Activated T-helper 1 cell treated with anti-CD3 and anti-CD28 coated beads, Interleukin-12 subunit alpha, Interleukin-12 subunit beta, Interleukin-2, Interleukin-4 antibody, amounts not matched to agents 30 ng/mL and 10 ng/mL and 1 ng/mL, durations not matched to agents 14 hours and 24 hours and 36 hours (primary cell): ENCODE measurements at regions of chr4 and their contacts with region 1.

Region 1: DNA sequence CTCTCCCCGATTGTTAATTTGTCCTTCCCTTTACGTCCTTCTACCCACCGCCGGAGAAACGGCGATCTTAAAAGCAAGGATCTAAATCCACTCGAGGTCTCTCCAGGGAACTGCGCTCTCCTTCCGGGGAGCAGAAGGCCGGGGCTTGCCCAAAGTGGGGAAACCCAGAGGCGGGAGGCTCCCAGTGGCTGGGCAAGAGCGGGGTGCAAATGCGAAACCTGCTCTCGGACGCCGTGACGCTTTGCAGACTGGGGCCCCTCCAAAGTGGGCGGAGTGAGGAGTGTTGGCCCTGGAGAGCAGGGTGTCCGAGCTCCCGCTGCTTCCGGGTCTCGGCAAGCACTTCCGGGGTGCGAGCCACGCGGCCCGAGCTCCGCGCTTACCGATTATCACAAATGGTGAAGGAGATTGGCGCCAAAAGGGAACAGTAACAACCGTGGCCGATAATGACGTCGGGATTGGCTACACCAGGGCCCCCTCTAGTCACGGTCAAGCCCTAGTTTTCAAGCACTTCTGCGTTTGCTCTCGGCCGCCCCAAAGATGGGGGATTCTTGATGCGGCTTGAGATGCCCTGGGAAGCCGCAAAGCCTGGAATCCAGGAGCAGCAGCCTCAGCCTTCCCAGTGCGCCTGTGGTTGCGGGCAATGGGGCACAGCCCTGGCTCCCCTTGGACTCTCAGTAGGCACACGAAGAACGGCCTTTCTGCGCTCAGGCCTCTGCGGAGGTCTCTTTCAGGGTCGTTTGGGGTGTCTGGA is 29.0 kb downstream of the HAND2 start:
- DNase-seq: no peak
- H3K4me3 Mint-ChIP-seq: peak overlapping the region; percentile 7
- H3K27ac Mint-ChIP-seq: no peak overlapping the region
- H3K4me1 Mint-ChIP-seq: peaks cover 6% of the 10 kb centered on the region
- H3K27me3 Mint-ChIP-seq: peaks cover 78% of the 10 kb centered on the region

Region 2: DNA sequence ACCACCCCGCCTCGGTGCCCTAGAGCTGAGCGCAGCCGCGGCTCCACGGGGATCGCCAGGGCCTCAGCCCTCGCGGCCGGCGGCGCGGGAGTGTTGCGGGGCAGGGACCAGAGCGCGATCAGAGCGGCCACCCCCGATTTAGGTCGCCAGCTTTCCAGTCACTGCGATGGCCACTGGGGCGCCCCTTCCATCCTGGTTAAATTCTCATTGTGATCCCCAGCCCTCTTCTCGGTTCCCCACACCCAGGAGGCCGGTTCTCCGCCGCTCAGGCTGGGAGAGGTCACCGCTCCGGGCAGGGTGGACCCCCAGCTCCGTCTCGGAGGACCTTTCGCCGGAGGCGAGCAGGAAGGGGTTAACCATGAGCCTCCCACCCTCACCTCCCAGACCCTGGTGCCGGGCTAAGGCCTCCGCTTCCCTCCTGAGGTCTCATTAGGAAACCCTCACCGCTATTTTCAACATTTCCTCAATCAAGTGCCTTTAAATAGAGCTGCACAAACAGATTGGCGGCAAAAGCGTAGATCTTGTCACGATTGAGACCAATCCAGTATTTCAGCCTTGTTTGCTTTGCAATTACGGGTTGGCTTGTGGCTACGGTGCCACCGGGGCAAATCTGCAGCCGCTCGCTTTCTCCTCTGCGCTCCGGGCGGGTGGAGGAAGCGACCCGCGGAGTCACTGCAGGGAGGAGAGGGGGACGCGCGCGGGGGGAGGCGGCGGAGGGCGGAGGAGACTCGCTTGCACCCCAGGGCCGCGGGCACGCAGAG is 37.3 kb after region 1 on chr4:
- intact Hi-C with region 1: loop called (anchors 5 kb)
- DNase-seq: no peak
- H3K4me3 Mint-ChIP-seq: peak overlapping the region; percentile 2
- H3K27ac Mint-ChIP-seq: no peak overlapping the region
- H3K4me1 Mint-ChIP-seq: peaks cover 4% of the 10 kb centered on the region
- H3K27me3 Mint-ChIP-seq: peaks cover 69% of the 10 kb centered on the region

Region 3: GRCh38 chr4:174047363-174047762 is 546.3 kb after region 1 on chr4:
- intact Hi-C with region 1: no loop called
- DNase-seq: no peak
- H3K4me3 Mint-ChIP-seq: no peak overlapping the region
- H3K27ac Mint-ChIP-seq: no peak overlapping the region
- H3K4me1 Mint-ChIP-seq: no peaks in the 10 kb centered on the region
- H3K27me3 Mint-ChIP-seq: peaks cover 3% of the 10 kb centered on the region